ENCODE measurements at regions of chr3 and their contacts with region 1.

Region 1: DNA sequence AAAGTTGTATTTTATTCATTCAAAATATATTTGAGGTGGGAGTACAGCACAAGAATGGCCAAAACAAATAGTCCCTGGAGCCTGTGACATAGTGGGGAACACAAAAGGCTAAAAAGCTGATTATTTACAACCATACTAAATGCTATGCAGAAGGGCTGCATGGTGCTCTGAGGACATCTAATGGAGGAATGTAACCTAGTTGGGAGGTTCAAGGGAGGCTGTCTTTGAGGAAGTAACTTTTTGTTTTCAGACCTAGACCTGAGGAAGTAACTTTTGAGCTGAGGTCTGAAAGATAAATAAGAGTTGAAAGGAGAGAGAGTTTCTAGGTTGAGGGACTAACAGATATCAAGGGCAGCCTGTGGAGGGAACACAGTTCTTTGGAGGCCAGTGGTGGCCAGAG is 34.8 kb upstream of the RASA2 start:
- DNase-seq: peak; percentile 71
- H3K4me3 Mint-ChIP-seq: no peak overlapping the region
- H3K27ac Mint-ChIP-seq: no peak overlapping the region
- H3K4me1 Mint-ChIP-seq: peaks cover 8% of the 10 kb centered on the region
- H3K27me3 Mint-ChIP-seq: peaks cover 4% of the 10 kb centered on the region

Region 2: GRCh38 chr3:141279077-141279967 is 172.7 kb before region 1 on chr3:
- CTCF ChIA-PET with region 1: interaction called, 10 read pairs
- DNase-seq: no peak
- H3K4me3 Mint-ChIP-seq: no peak overlapping the region
- H3K27ac Mint-ChIP-seq: no peak overlapping the region
- H3K4me1 Mint-ChIP-seq: peaks cover 21% of the 10 kb centered on the region
- H3K27me3 Mint-ChIP-seq: no peaks in the 10 kb centered on the region

Region 3: GRCh38 chr3:141303481-141304223 is 148.4 kb before region 1 on chr3:
- CTCF ChIA-PET with region 1: interaction called, 347 read pairs
- DNase-seq: peak; percentile 71
- H3K4me3 Mint-ChIP-seq: no peak overlapping the region
- H3K27ac Mint-ChIP-seq: no peak overlapping the region
- H3K4me1 Mint-ChIP-seq: peaks cover 58% of the 10 kb centered on the region
- H3K27me3 Mint-ChIP-seq: peaks cover 3% of the 10 kb centered on the region

Region 4: DNA sequence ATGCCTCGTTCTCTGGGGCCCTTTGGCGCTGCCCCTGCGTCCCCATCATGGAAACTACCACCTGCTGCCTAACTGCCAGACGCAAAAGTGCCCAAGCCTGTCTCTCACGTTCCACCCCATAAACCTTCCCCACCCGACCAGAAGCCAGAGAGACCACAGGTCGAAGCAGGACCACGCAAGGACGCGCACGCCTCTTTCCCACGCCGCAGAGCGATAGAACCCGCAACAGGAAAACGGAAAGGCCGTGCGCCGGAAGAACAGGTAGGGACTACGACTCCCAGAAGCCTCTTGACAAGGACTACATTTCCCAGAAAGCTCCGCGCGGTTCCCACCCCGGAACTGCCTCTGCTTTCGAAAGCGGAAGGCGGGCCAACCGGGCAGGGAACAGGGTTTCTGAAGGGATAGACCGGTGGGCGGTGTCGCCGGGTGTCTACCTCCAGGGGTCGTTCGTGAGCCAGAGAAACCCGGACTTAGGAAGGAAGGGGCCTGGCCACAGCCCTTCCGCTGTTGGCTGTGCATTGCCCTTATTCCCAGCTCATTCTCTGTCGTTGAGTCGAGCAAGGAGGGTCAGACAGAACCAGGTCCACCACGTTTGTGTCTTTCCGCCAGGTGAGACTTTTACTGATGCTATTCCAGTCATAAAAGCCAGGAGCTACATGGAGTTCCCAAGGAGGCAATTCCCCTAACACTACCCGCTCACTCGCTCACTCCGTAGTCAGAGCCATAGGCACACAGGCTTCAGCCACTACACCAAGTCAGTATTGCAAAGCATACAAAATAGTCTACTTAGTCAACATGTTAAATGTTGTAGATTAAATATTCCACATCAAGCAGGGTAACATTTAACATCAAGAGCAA is 140.3 kb before region 1 on chr3:
- CTCF ChIA-PET with region 1: interaction called, 347 read pairs
- DNase-seq: peak; percentile 99
- H3K4me3 Mint-ChIP-seq: peak overlapping the region; percentile 96
- H3K27ac Mint-ChIP-seq: peak overlapping the region; percentile 97
- H3K4me1 Mint-ChIP-seq: peaks cover 64% of the 10 kb centered on the region
- H3K27me3 Mint-ChIP-seq: no peaks in the 10 kb centered on the region

Region 5: GRCh38 chr3:141370065-141370533 is 81.9 kb before region 1 on chr3:
- CTCF ChIA-PET with region 1: interaction called, 23 read pairs
- DNase-seq: peak; percentile 63
- H3K4me3 Mint-ChIP-seq: no peak overlapping the region
- H3K27ac Mint-ChIP-seq: no peak overlapping the region
- H3K4me1 Mint-ChIP-seq: peaks cover 8% of the 10 kb centered on the region
- H3K27me3 Mint-ChIP-seq: peaks cover 8% of the 10 kb centered on the region

Measured in activated naive CD4-positive, alpha-beta T cell treated with anti-CD3 and anti-CD28 coated beads, Interleukin-2, amount 10 ng/mL, durations not matched to agents 7 days and 5 days (primary cell).